ENCODE measurements at regions of chr5 and their contacts with region 1.

Region 1: GRCh38 chr5:78137290-78137689 is 157.2 kb downstream of the AP3B1 start:
- DNase-seq: no peak
- H3K4me3 ChIP-seq: no peak overlapping the region
- H3K27ac ChIP-seq: no peak overlapping the region
- H3K4me1 ChIP-seq: no peaks in the 10 kb centered on the region
- H3K27me3 ChIP-seq: no peaks in the 10 kb centered on the region
- CTCF ChIP-seq: no peak

Region 2: DNA sequence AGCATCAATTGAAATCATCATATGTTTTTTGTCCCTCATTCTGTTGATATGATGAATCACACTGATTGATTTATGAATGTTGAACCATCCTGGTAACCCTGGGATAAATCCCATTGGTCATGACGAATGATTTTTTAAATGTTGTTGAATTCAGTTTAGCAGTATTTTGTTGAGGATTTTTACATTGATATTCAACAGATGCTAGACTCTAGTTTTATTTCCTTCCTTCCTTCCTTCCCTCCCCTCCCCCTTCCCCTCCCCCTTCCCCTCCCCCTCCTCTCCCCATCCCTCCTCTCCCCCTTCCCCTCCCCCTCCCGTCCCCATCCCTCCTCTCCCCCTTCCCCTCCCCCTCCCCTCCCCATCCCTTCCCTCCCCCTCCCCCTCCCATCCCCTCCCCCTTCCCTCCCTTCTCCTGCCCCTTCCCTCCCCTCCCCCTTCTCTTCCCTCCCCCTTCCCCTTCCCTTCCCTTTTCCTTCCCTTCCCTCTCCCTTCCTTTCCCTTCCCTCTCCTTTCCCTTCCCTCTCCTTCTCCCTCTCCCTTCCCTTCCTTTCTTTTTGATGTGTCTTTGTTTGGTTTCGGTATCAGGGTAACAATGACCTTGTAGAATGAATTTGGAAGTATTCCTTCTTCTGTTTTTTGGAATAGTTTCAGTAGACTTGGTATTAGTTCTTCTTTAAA is 14.4 kb after region 1 on chr5:
- CTCF ChIA-PET with region 1: interaction called, 11 read pairs
- POLR2A ChIA-PET with region 1: no interaction called
- intact Hi-C with region 1: no loop called
- DNase-seq: no peak
- H3K4me3 ChIP-seq: no peak overlapping the region
- H3K27ac ChIP-seq: no peak overlapping the region
- H3K4me1 ChIP-seq: no peaks in the 10 kb centered on the region
- H3K27me3 ChIP-seq: no peaks in the 10 kb centered on the region
- CTCF ChIP-seq: no peak

Region 3: GRCh38 chr5:79235634-79236363 is 1098.5 kb after region 1 on chr5 and contains the start of gene JMY:
- CTCF ChIA-PET with region 1: no interaction called
- POLR2A ChIA-PET with region 1: no interaction called
- intact Hi-C with region 1: no loop called
- DNase-seq: peak; percentile 91
- H3K4me3 ChIP-seq: peak within 1 kb of the TSS; percentile 81
- H3K27ac ChIP-seq: peak within 1 kb of the TSS; percentile 52
- H3K4me1 ChIP-seq: no peaks in the 10 kb centered on the region
- H3K27me3 ChIP-seq: peaks cover 13% of the 10 kb centered on the region
- CTCF ChIP-seq: 0 out of 2 replicates have a peak, but pooled peaks have one; percentile 14
- total RNA-seq, gene JMY: 3.5 and 4.0 TPM in 2 replicates

Measured in A673 (cell line).